AG04449 (cell line): ENCODE measurements at regions of chr7 and their contacts with region 1.

Region 1: DNA sequence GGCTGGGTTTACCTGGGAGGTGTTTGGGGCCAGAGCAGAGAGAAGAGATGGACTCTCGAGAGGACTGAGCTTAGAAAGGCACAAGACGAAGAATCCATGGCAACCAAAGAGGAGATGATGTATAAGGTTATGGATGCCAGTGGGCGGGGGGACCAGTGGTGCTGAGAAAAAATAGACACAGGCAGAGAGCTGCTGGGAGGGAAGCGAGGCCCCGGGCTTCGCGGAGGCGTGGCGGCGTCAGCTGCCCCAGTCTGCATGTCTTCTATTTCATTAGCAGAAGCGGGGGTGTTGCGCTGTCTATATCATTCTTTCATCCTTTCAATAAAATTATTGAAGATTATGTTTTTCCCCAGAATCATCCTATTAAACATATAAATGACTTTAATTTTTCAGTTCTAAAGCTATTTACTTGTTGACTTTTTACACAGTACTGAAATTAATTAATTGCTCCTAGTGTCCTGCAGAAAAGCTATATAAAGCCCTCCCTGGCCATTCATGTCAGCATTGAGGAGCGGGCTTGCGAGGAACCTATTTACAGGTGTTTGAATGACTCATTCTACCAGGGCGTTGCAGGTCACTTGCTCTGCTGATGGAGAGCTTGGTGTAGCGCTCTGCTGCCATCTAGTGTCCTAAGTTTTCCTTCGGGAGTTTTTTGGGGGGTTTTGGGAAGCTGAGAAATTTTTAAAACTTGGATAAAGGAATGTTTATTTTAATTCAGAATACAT is 42.9 kb upstream of the BHLHA15 start:
- DNase-seq: no peak
- H3K4me3 ChIP-seq: no peak overlapping the region
- CTCF ChIP-seq: peak; percentile 71

Region 2: DNA sequence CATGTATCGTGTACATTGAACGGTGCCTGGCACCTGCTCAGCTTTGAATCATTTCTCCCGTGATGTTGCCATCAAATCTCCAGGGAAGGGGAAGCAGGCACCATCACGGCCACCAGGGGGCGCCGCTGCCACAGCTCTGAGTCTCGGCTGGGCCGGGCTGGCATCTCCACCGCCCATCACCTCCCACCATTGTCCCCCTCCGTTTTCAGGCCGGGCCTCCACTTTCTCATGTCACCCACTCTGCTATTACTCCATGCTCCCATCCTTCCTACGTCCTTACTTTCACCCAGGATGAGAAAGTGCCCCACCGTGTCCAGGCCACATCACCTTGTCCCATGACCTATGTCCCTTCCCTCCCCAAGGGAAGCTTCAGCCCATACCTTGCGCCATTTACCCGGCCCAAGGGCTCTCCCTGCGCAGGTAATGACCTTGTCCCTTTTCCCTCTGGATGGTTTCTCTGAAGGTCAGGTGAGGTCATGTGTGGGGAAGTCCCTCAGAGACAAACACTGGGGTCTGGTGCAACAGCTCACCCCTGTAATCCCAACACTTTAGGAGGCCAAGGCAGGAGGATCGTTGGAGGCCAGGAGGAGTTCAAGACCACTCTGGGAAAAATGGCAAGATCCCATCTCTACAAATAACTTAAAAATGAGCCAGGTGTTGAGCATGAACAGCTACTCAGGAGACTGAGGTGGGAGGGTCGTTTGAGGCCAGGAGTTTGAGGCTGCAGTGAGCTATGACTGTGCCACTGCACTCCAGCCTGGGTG is 146.6 kb before region 1 on chr7:
- CTCF ChIA-PET with region 1: interaction called, 544 read pairs
- POLR2A ChIA-PET with region 1: no interaction called
- DNase-seq: no peak
- H3K4me3 ChIP-seq: no peak overlapping the region
- CTCF ChIP-seq: peak; percentile 97

Region 3: GRCh38 chr7:98106647-98107445 is 61.5 kb before region 1 on chr7 and contains the start of gene LMTK2:
- CTCF ChIA-PET with region 1: interaction called, 170 read pairs
- POLR2A ChIA-PET with region 1: no interaction called
- DNase-seq: peak; percentile 36
- H3K4me3 ChIP-seq: peak within 1 kb of the TSS; percentile 84
- CTCF ChIP-seq: peak; percentile 95

Region 4: GRCh38 chr7:98133181-98133580 is 35.2 kb before region 1 on chr7:
- CTCF ChIA-PET with region 1: interaction called, 22 read pairs
- POLR2A ChIA-PET with region 1: no interaction called
- DNase-seq: no peak
- H3K4me3 ChIP-seq: no peak overlapping the region
- CTCF ChIP-seq: no peak

Region 5: GRCh38 chr7:98149116-98149692 is 19.1 kb before region 1 on chr7:
- CTCF ChIA-PET with region 1: interaction called, 10 read pairs
- POLR2A ChIA-PET with region 1: no interaction called
- DNase-seq: no peak
- H3K4me3 ChIP-seq: no peak overlapping the region
- CTCF ChIP-seq: no peak

Region 6: DNA sequence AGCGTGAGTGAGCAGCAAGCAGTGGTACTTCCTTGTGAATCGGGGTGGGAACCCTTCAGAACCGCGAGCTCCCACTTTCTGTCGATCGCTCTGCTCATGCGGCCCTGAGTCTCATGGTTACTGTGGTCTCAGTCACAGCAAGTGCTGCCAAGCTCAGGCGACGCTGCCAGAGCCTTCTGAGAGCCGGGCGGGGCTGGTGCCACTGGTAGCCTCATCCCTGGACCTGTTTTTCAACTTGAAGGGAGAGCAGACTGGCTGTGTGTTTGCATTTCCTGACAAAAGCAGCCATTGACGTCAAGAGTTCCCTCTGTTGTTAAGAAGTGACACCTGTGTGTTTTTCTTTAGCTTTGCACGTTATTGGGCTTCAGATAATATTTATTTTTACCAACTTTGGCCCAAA is 10.0 kb after region 1 on chr7:
- CTCF ChIA-PET with region 1: interaction called, 103 read pairs
- POLR2A ChIA-PET with region 1: no interaction called
- DNase-seq: no peak
- H3K4me3 ChIP-seq: no peak overlapping the region
- CTCF ChIP-seq: no peak